Right lobe of liver (tissue), 6 donors: ENCODE measurements at regions of chr16 and their contacts with region 1.

Region 1: DNA sequence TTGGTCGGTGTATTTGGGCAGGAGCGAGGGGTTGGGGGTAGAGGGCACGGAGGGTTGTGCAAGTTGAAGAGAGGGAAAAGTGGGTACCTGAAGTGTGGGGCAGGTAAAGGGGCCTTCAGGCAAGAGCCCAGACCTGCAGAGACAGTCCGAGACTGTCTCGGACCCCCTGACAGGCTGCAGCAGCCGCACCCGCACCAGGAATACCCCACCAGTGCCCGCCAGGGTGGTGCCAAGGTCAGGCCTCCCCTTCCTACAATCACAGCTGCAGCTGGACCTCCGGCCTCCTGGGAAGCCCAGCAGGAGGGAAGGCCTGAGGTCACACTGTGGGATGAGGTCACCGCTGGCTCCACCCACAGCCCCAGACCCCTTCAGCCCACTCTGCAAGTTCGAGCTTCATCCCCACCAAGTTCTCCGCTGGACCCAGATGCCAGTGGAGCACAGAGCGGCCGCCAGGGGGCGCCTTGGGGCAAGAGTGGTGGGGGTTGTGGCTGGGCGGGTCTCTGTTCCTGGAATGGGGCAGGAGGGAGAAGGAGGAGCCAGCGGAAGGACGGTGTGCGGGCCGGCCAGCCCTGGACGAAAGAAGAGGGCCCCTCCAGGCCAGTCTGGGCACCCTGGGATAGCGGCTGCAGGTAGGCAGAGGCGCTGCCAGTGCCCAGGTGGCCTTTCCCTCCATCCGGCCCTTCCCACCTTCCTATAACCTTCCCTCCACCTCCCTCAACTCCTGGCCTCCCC is at the start of gene HSD3B7:
- DNase-seq: peak; percentile 93 to 94 (median 93)
- ATAC-seq: peak; percentile 82 to 92 (median 88)
- H3K4me3 ChIP-seq: peak within 1 kb of the TSS; percentile 62 to 73 (median 72)
- H3K27ac ChIP-seq: peak within 1 kb of the TSS; percentile 74 to 80 (median 79)
- H3K4me1 ChIP-seq: peaks cover 0 to 12% (median 5%) of the 10 kb centered on the region in 4 donors
- H3K27me3 ChIP-seq: no peaks in the 10 kb centered on the region
- CTCF ChIP-seq: peak; percentile 87 to 98 (median 90)
- POLR2A ChIP-seq: peak; percentile 64
- total RNA-seq, gene HSD3B7: 54.6 to 219 (median 86.9) TPM

Region 2: DNA sequence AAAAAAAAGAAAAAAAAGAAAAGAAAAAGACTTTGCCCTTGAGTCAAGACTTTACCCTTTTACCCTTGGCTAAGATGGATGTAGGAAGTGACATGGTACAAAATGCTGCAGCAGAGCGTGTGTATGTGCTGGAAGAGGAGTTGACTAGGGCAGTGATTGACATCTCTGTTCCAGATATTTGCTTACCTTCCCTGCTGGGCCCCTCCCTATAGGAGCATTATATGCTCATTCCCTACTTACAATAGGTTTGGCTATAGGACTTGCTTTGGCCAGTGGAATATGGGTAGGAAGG is 59.3 kb after region 1 on chr16:
- intact Hi-C with region 1: loop called in 1 of 2 experiments (anchors 10 kb)
- DNase-seq: no peak
- ATAC-seq: peak in 3 of 4 donors; percentile 10 to 52 (median 15)
- H3K4me3 ChIP-seq: no peak overlapping the region
- H3K27ac ChIP-seq: no peak overlapping the region
- H3K4me1 ChIP-seq: peaks cover 0 to 6% (median 0%) of the 10 kb centered on the region in 4 donors
- H3K27me3 ChIP-seq: no peaks in the 10 kb centered on the region
- CTCF ChIP-seq: no peak
- POLR2A ChIP-seq: no peak

Region 3: DNA sequence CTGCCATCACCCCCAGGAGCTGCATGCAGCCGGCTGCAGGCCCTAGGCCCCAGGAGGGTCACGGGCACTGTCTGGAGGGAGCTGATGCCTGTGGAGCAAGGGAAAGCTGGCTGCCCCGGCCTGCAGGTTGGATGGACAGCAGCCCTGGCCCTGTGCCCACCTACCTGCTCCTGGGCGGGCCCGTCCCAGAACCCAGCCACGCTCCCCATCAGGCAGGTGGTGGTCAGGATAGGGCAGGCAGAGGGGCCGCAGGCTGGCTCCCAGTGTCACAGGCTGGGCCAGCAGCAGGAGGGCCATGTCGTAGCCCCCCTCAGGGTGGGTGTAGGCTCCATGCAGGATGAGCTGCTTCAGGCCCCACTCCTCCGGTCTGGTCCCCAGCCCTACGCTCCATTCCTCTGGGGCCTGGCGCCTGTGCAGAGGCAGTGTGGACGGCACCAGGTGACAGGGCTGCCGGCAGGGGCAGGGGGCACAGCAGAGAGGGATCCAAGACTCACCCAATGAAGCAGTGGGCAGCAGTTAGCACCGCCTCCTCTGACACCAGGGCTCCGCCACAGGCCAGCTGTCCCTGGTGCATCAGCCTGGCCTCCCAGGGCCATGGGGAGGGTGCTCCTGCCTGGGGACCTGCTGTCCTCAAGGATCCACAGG is 99.9 kb after region 1 on chr16:
- intact Hi-C with region 1: loop called in 1 of 2 experiments (anchors 10 kb)
- DNase-seq: peak in 2 of 3 donors; percentile 30 to 51
- ATAC-seq: peak in 2 of 4 donors; percentile 3
- H3K4me3 ChIP-seq: no peak overlapping the region
- H3K27ac ChIP-seq: no peak overlapping the region
- H3K4me1 ChIP-seq: no peaks in the 10 kb centered on the region
- H3K27me3 ChIP-seq: no peaks in the 10 kb centered on the region
- CTCF ChIP-seq: no peak
- POLR2A ChIP-seq: no peak

Region 4: DNA sequence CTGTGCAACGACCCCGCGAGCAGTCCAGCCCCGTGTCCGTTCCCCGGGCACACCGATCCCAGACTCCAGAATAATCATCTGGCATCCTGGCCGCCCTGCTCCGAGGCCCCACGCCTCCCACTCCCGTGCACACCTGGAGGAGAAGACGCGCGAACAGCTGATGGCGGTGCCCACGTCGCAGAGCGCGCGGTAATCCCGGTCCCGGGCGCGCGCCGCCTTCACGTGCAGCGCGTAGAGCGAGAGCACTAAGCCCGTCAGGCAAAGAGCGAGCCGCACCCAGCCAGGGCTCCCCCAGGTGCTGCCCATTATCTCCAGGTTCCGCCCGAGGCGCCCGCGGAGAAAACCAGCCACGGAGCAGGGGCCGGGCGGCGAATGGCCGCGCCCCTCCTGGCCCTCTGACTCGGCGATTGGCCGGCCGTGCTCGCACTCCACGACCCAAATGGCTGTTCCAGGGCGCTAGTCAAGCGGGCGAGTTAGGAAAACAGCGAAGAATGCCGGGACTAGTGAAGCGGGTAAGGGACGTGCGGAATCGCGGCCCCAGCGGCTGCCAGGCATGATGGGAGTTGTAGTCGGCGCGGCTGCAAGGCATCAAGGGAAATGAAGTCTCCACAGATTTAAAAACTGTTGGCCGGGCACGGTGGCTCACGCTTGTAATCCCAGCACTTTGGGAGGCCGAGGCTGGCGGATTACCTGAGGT is 109.7 kb after region 1 on chr16 and contains the start of gene VKORC1:
- intact Hi-C with region 1: loop called (anchors 5 to 10 kb)
- DNase-seq: peak; percentile 96 to 98 (median 98)
- ATAC-seq: peak; percentile 86 to 94 (median 92)
- H3K4me3 ChIP-seq: peak within 1 kb of the TSS; percentile 82 to 96 (median 94)
- H3K27ac ChIP-seq: peak within 1 kb of the TSS; percentile 82 to 90 (median 84)
- H3K4me1 ChIP-seq: peaks cover 0 to 15% (median 0%) of the 10 kb centered on the region in 4 donors
- H3K27me3 ChIP-seq: no peaks in the 10 kb centered on the region
- CTCF ChIP-seq: no peak
- POLR2A ChIP-seq: peak; percentile 91
- total RNA-seq, gene VKORC1: 102 to 297 (median 199) TPM